ENCODE measurements at regions of chr4 and their contacts with region 1.

Region 1: GRCh38 chr4:151099229-151099975 is at the start of gene RPS3A:
- DNase-seq: peak; percentile 94 to 100 (median 99)
- H3K4me3 ChIP-seq: peak within 1 kb of the TSS; percentile 94
- H3K4me3 Mint-ChIP-seq: peak within 1 kb of the TSS; percentile 95 to 99 (median 98)
- H3K27ac ChIP-seq: peak within 1 kb of the TSS; percentile 88
- H3K27ac Mint-ChIP-seq: peak within 1 kb of the TSS; percentile 95 to 99 (median 98)
- H3K4me1 ChIP-seq: peaks cover 26% of the 10 kb centered on the region
- H3K4me1 Mint-ChIP-seq: peaks cover 30 to 56% (median 35%) of the 10 kb centered on the region in 3 donors
- H3K27me3 ChIP-seq: no peaks in the 10 kb centered on the region
- H3K27me3 Mint-ChIP-seq: peaks cover 5 to 9% of the 10 kb centered on the region in 2 donors
- total RNA-seq, gene RPS3A: 2,661 to 2,678 TPM

Region 2: GRCh38 chr4:151015459-151016347 is 83.7 kb before region 1 on chr4:
- CTCF ChIA-PET with region 1: interaction called, 5 read pairs
- POLR2A ChIA-PET with region 1: interaction called, 30 read pairs
- DNase-seq: peak; percentile 75 to 91 (median 88)
- H3K4me3 ChIP-seq: peak overlapping the region; percentile 74
- H3K4me3 Mint-ChIP-seq: peak overlapping the region; percentile 98 to 100 (median 100)
- H3K27ac ChIP-seq: peak overlapping the region; percentile 83
- H3K27ac Mint-ChIP-seq: peak overlapping the region; percentile 92 to 100 (median 99)
- H3K4me1 ChIP-seq: peaks cover 16% of the 10 kb centered on the region
- H3K4me1 Mint-ChIP-seq: peaks cover 31 to 38% (median 37%) of the 10 kb centered on the region in 3 donors
- H3K27me3 ChIP-seq: no peaks in the 10 kb centered on the region
- H3K27me3 Mint-ChIP-seq: peaks cover 0 to 3% of the 10 kb centered on the region in 2 donors